ENCODE measurements at regions of chr2 and their contacts with region 1.

Region 1: DNA sequence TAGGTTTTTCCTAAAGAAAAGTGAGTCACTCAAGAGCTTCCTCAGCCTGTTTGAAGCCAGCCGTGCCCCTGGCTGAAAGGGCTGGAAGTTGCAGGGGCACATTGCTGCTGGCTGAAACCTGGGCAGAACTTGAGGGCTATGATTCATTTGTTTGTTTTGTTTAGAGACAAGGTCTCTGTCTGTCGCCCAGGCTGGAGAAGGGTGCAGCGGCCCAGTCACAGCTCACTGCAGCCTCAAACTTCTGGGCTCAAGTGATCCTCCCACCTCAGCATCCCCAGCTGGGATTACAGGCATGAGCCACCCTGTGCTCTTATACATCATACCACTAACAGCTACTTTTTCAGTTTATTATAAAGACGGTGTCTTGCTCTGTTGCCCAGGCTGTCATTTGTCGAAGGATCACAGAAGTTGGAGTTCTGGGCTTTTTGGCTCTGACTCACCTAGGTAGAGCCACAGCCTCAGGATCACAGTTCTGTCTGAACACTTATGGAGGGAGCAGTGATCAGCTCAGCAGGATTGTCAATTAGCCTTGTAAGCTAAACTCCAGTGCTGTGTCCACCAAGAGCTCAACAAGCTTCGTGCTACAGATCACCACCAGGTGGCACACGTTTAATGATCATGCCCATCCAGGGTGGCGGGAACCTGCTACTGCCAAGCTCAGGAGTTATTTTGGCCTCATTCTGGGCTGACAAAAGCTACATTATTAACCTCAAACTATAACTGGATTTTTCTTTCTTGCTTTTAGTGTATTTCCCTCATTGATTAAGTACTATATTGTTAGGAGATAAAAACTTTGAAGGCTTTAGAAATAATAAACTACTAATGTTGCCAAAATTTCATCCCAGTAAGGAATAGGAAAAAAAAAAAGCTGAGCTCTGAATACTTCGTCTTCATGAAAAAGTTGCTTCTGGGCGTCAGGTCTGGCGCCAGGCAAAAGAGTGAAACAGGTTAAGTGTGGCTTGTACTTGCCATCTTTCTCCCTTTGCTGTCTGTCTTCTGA is 57.9 kb downstream of the ARHGEF33 start:
- DNase-seq: peak; percentile 78
- H3K4me3 Mint-ChIP-seq: no peak overlapping the region
- H3K27ac Mint-ChIP-seq: no peak overlapping the region
- H3K4me1 Mint-ChIP-seq: no peaks in the 10 kb centered on the region
- H3K27me3 Mint-ChIP-seq: peaks cover 3% of the 10 kb centered on the region

Region 2: GRCh38 chr2:38935568-38936172 is 11.9 kb before region 1 on chr2:
- CTCF ChIA-PET with region 1: interaction called, 12 read pairs
- POLR2A ChIA-PET with region 1: no interaction called
- DNase-seq: no peak
- H3K4me3 Mint-ChIP-seq: no peak overlapping the region
- H3K27ac Mint-ChIP-seq: no peak overlapping the region
- H3K4me1 Mint-ChIP-seq: no peaks in the 10 kb centered on the region
- H3K27me3 Mint-ChIP-seq: peaks cover 15% of the 10 kb centered on the region

Region 3: DNA sequence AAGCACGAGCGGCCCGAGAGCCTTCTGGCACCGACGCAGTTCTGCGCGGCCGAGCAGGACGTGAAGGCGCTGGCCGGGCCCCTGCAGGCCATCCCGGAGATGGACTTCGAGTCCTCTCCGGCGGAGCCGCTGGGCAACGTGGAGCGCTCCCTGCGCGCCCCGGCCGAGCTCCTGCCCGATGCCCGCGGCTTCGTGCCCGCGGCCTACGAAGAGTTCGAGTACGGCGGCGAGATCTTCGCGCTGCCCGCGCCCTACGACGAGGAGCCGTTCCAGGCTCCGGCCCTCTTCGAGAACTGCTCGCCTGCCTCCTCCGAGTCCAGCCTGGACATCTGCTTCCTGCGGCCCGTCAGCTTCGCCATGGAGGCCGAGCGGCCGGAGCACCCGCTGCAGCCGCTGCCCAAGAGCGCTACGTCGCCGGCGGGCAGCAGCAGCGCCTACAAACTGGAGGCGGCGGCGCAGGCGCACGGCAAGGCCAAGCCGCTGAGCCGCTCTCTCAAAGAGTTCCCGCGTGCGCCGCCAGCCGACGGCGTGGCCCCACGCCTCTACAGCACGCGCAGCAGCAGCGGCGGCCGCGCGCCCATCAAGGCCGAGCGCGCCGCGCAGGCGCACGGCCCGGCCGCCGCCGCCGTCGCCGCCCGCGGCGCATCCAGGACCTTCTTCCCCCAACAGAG is 12.5 kb after region 1 on chr2:
- CTCF ChIA-PET with region 1: interaction called, 36 read pairs
- POLR2A ChIA-PET with region 1: interaction called, 6 read pairs
- DNase-seq: peak; percentile 78
- H3K4me3 Mint-ChIP-seq: peak overlapping the region; percentile 54
- H3K27ac Mint-ChIP-seq: no peak overlapping the region
- H3K4me1 Mint-ChIP-seq: peaks cover 3% of the 10 kb centered on the region
- H3K27me3 Mint-ChIP-seq: peaks cover 35% of the 10 kb centered on the region

Region 4: GRCh38 chr2:39059366-39059952 is 111.9 kb after region 1 on chr2:
- CTCF ChIA-PET with region 1: interaction called, 15 read pairs
- POLR2A ChIA-PET with region 1: no interaction called
- DNase-seq: no peak
- H3K4me3 Mint-ChIP-seq: no peak overlapping the region
- H3K27ac Mint-ChIP-seq: no peak overlapping the region
- H3K4me1 Mint-ChIP-seq: peaks cover 37% of the 10 kb centered on the region
- H3K27me3 Mint-ChIP-seq: no peaks in the 10 kb centered on the region

Region 5: GRCh38 chr2:39243476-39244123 is 296.1 kb after region 1 on chr2 and contains the start of gene CDKL4:
- CTCF ChIA-PET with region 1: interaction called, 16 read pairs
- POLR2A ChIA-PET with region 1: no interaction called
- DNase-seq: peak; percentile 57
- H3K4me3 Mint-ChIP-seq: peak within 1 kb of the TSS; percentile 67
- H3K27ac Mint-ChIP-seq: peak within 1 kb of the TSS; percentile 20
- H3K4me1 Mint-ChIP-seq: peaks cover 23% of the 10 kb centered on the region
- H3K27me3 Mint-ChIP-seq: peaks cover 6% of the 10 kb centered on the region
- total RNA-seq, gene CDKL4: 0.25 TPM in 1 of 2 experiments, not detected in the other

Region 6: GRCh38 chr2:40087434-40087833 is 1139.9 kb after region 1 on chr2:
- CTCF ChIA-PET with region 1: no interaction called
- POLR2A ChIA-PET with region 1: no interaction called
- DNase-seq: no peak
- H3K4me3 Mint-ChIP-seq: no peak overlapping the region
- H3K27ac Mint-ChIP-seq: no peak overlapping the region
- H3K4me1 Mint-ChIP-seq: no peaks in the 10 kb centered on the region
- H3K27me3 Mint-ChIP-seq: no peaks in the 10 kb centered on the region

Measured in activated CD4-positive, alpha-beta memory T cell treated with anti-CD3 and anti-CD28 coated beads, Interleukin-2, amount 10 ng/mL, durations not matched to agents 7 days and 5 days (primary cell).